Breast epithelium (tissue), 4 donors: ENCODE measurements at regions of chr3 and their contacts with region 1.

Region 1: DNA sequence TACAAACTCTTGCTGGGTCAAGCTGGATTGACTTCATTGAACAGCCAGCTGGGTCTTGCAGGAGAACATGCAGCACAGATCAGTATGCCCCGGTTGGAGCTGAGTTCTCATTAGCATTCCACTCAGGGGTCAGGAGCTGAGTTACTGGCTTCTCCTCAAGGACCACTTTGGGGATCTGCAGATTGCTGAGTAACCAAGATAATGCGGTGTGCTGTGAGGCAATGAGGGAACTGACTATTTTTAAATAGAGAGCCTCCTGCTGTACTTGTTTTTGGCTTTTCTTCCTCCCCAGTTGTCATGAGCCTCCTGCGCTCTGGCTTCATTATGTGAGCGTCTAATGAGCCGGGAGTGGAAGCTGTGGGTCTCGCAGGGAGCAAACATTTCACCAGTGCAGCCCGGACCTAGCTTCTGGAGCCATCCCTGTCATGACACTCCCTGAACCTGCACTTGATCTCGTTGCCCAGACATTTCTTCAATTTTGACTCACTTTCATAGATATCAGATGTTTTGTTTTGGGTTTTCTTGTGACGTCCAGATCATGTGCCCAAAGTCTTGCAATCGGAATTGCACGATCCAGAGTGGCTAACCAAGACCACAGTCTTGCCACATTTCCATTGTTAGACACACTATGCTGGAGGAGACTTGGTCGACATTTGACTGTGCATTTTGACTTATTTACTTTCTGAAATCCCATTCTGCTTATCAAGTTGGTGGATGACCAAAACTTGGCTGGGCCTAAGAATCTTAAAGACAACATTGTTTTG is 327.2 kb downstream of the LRTM1 start:
- DNase-seq: no peak
- H3K4me3 ChIP-seq: peak overlapping the region in 1 of 3 donors; percentile 52
- H3K27ac ChIP-seq: peak overlapping the region in 1 of 2 donors; percentile 48
- H3K4me1 ChIP-seq: no peaks in the 10 kb centered on the region
- H3K27me3 ChIP-seq: no peaks in the 10 kb centered on the region
- CTCF ChIP-seq: no peak
- POLR2A ChIP-seq: no peak

Region 2: GRCh38 chr3:55709411-55710012 is 1108.9 kb after region 1 on chr3:
- intact Hi-C with region 1: loop called (anchors 5 kb)
- DNase-seq: no peak
- H3K4me3 ChIP-seq: no peak overlapping the region
- H3K27ac ChIP-seq: no peak overlapping the region
- H3K4me1 ChIP-seq: no peaks in the 10 kb centered on the region
- H3K27me3 ChIP-seq: no peaks in the 10 kb centered on the region
- CTCF ChIP-seq: no peak
- POLR2A ChIP-seq: no peak